ENCODE measurements at regions of chr3 and their contacts with region 1.

Region 1: DNA sequence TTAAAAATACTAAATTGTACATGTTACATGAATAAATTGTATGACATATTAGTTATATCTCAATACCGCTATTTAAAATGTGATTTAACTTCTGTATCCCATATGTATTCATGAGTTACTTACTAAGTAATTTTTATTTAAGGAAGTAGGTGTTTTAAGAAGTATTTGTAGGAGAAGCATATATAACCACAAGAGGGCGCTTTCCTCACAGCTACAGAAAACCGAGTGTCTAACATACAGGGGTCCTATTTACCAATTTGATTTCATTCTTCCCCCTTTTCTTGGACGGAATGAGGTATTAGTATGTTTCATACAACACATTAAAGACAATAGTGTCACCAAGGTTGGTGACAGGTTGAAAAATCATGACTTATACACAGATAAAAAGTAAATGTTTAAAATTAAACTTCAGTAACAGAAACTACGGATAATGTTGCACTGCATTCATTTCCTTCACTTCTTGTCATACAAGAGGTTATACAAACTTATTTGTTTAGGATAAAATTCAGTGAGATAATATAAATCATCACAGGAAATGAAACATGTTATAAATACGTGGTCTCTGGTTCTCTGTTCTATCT is 253.6 kb downstream of the MAGI1 start:
- DNase-seq: no peak
- ATAC-seq: peak; percentile 37
- H3K4me3 ChIP-seq: no peak overlapping the region
- H3K27ac ChIP-seq: no peak overlapping the region
- H3K4me1 ChIP-seq: peaks cover 7 to 8% of the 10 kb centered on the region in 2 donors
- H3K27me3 ChIP-seq: no peaks in the 10 kb centered on the region

Region 2: GRCh38 chr3:65334045-65334665 is 451.0 kb before region 1 on chr3:
- intact Hi-C with region 1: no loop called
- DNase-seq: no peak
- ATAC-seq: no peak
- H3K4me3 ChIP-seq: no peak overlapping the region
- H3K27ac ChIP-seq: no peak overlapping the region
- H3K4me1 ChIP-seq: peaks cover 0 to 2% of the 10 kb centered on the region in 2 donors
- H3K27me3 ChIP-seq: no peaks in the 10 kb centered on the region

Region 3: GRCh38 chr3:65831733-65832425 is 46.7 kb after region 1 on chr3:
- intact Hi-C with region 1: loop called in 1 of 2 experiments (anchors 5 kb)
- DNase-seq: no peak
- ATAC-seq: no peak
- H3K4me3 ChIP-seq: no peak overlapping the region
- H3K27ac ChIP-seq: peak overlapping the region in 1 of 2 donors; percentile 44
- H3K4me1 ChIP-seq: peaks cover 3 to 5% of the 10 kb centered on the region in 2 donors
- H3K27me3 ChIP-seq: no peaks in the 10 kb centered on the region

Region 4: GRCh38 chr3:65888980-65889706 is 104.0 kb after region 1 on chr3:
- intact Hi-C with region 1: loop called (anchors 5 to 10 kb)
- DNase-seq: peak in 1 of 2 donors; percentile 53
- ATAC-seq: peak; percentile 87
- H3K4me3 ChIP-seq: no peak overlapping the region
- H3K27ac ChIP-seq: no peak overlapping the region
- H3K4me1 ChIP-seq: peaks cover 0 to 4% of the 10 kb centered on the region in 2 donors
- H3K27me3 ChIP-seq: no peaks in the 10 kb centered on the region

Region 5: DNA sequence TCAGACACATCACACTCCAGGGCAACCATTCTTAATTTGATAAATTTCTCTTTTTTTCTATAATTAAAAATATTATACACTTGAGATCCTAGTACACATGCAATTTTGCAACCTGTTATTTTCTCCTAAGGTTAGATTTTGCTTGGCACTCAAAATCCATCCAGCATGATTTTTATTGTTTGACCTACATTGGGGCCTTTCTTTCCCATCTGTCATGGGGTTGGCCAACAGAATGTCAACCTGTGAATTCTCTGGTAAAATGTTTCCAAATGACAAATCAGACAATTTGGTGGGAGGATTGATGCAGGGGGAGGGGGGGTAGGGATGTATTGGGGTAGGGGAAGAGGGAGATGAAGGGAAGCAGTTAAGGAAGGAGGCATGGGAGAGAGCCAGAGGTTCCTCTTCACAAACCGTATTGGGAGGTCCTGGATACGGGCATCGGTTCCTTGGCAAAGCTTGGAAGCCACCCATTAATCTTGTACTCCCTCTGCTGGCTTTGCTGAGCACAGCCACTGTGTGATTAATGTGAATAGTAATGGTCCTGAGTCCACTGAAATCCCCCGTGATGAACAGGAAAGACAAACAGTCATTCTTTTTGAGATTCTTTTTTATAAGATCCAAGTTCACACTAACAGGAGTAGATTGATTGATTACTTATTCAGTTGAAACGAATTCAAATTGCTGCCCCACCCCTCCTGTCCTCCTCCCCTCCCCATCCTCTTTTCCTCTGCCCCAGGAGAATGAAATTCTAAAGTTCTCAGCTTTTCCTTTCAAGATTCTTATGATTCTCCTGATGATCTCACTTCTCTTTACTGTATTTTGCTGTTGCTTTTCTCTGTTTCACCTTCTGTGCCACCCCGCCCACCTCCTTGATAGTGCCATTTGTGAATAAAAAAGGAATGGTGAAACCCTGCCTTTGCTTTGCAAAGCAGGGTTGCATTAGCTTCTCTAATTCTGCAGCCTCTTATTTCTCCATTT is 353.5 kb after region 1 on chr3:
- intact Hi-C with region 1: loop called (anchors 1 to 5 kb)
- DNase-seq: peak in 1 of 2 donors; percentile 59
- ATAC-seq: peak; percentile 85
- H3K4me3 ChIP-seq: no peak overlapping the region
- H3K27ac ChIP-seq: no peak overlapping the region
- H3K4me1 ChIP-seq: no peaks in the 10 kb centered on the region
- H3K27me3 ChIP-seq: no peaks in the 10 kb centered on the region

Region 6: DNA sequence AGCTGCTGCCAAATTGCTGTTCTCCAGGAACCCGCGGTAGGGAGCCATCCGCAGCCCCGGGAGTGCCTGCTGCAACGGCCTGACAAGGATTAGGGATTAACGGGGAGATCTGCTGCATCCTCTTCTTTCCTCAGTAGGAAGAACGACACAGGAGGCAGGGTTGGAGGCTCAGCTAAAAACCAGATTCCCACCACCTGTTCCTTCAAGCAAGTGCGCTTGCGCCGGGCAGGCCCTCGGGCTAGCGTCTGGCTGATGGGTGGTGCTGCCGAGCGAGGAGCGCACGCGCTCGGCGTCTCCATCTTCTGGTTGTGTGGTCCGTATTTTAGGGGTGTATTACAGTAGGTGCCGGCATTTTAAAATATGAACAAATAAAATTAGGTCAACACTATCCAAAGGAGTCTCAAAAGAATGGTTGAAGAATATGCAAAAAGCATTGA is 410.2 kb after region 1 on chr3:
- intact Hi-C with region 1: loop called in 1 of 2 experiments (anchors 5 kb)
- DNase-seq: peak; percentile 59 to 85
- ATAC-seq: peak; percentile 60
- H3K4me3 ChIP-seq: no peak overlapping the region
- H3K27ac ChIP-seq: no peak overlapping the region
- H3K4me1 ChIP-seq: no peaks in the 10 kb centered on the region
- H3K27me3 ChIP-seq: no peaks in the 10 kb centered on the region

Measured in aorta (tissue), 5 donors.